ENCODE measurements at regions of chr10 and their contacts with region 1.

Region 1: GRCh38 chr10:97349752-97350513 is 15.4 kb upstream of the FRAT2 start:
- DNase-seq: no peak
- H3K4me3 ChIP-seq: no peak overlapping the region
- H3K27ac ChIP-seq: no peak overlapping the region
- H3K4me1 ChIP-seq: no peaks in the 10 kb centered on the region
- H3K27me3 ChIP-seq: no peaks in the 10 kb centered on the region
- CTCF ChIP-seq: no peak

Region 2: DNA sequence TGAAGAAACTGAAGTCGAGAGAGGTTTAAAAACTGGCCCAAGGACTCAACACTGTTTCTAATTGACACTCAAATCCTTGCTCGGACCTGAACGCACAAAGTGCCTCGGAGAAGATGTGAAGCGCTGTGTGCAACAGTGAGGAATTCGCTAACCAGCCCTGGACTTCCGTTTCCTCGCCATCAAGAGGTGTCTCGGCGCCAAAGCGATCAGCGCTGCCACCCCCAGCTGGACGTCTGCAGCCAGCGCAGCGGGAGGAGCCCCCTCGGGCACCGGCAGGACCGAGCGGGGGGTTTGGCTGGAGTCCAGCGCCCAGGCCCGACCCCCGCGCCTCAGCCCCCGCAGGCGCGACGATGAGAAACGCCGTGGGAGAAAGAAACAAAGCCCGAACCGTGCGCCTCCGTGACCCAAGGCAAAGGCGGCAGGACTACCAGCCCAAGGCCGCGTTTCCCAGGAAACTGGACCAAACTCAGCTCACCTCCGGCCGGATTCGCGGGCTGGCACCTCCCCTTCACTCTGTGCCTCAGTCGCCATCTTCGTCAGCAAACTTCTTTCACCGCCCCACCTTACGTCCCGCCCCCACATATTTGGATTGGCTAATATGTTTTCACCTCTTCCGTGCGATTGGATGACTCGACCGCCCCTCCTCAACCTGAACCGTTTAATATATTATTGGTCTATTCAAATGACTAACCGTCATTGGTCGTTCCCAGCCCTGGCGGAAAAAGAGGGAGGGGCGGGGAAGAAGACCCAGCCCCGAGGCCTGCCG is 57.7 kb before region 1 on chr10 and contains the start of gene ARHGAP19:
- CTCF ChIA-PET with region 1: no interaction called
- dilution Hi-C with region 1: loop called (anchors 5 kb)
- in situ Hi-C with region 1: no loop called
- intact Hi-C with region 1: no loop called
- DNase-seq: peak; percentile 99
- H3K4me3 ChIP-seq: peak within 1 kb of the TSS; percentile 77 to 95 (median 90)
- H3K27ac ChIP-seq: peak within 1 kb of the TSS; percentile 93
- H3K4me1 ChIP-seq: peaks cover 10% of the 10 kb centered on the region
- H3K27me3 ChIP-seq: no peaks in the 10 kb centered on the region
- CTCF ChIP-seq: peak; percentile 26 to 42
- total RNA-seq, gene ARHGAP19: 10.8 to 20.5 TPM

Region 3: GRCh38 chr10:97388152-97388551 is 38.2 kb after region 1 on chr10:
- CTCF ChIA-PET with region 1: no interaction called
- dilution Hi-C with region 1: loop called (anchors 5 kb)
- in situ Hi-C with region 1: no loop called
- intact Hi-C with region 1: no loop called
- DNase-seq: no peak
- H3K4me3 ChIP-seq: no peak overlapping the region
- H3K27ac ChIP-seq: no peak overlapping the region
- H3K4me1 ChIP-seq: no peaks in the 10 kb centered on the region
- H3K27me3 ChIP-seq: no peaks in the 10 kb centered on the region
- CTCF ChIP-seq: no peak

Region 4: GRCh38 chr10:97412891-97413304 is 63.0 kb after region 1 on chr10:
- CTCF ChIA-PET with region 1: no interaction called
- dilution Hi-C with region 1: no loop called
- in situ Hi-C with region 1: no loop called
- intact Hi-C with region 1: no loop called
- DNase-seq: peak; percentile 98
- H3K4me3 ChIP-seq: no peak overlapping the region
- H3K27ac ChIP-seq: peak overlapping the region; percentile 76
- H3K4me1 ChIP-seq: peaks cover 42% of the 10 kb centered on the region
- H3K27me3 ChIP-seq: no peaks in the 10 kb centered on the region
- CTCF ChIP-seq: no peak

Measured in mammary epithelial cell (primary cell).